MCF 10A (cell line): ENCODE measurements at regions of chr12 and their contacts with region 1.

Region 1: GRCh38 chr12:14185427-14186192 is 179.9 kb upstream of the ATF7IP start:
- DNase-seq: peak; percentile 61
- H3K4me3 Mint-ChIP-seq: no peak overlapping the region
- H3K27ac Mint-ChIP-seq: no peak overlapping the region
- H3K4me1 Mint-ChIP-seq: no peaks in the 10 kb centered on the region
- H3K27me3 Mint-ChIP-seq: peaks cover 20% of the 10 kb centered on the region
- CTCF ChIP-seq: peak; percentile 76

Region 2: DNA sequence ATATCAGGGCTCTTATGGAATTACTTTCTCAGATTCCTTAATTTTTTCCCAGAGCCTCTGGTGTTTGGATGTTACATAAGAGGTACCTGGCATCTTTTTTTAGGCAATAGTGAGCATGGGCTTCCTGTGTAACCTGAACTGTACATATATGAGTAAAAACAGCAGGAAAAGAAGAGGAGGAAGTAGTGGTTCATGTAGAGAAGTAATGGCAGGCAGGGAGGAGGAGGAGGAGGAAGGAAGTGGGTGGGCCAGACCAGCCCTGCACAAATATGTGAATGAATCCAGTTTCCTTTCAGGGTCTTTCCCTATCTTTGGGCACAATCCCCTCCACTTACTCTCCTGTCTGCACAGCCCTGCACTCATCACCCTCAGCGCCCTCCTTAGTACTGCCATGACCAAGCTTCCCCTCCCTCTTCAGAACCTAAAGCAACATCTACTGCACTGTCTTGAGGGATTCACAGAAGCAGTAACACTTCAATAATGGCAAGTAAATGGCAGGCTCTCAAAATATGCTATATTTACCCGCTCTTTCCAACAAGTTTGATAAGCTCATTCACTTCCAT is 1041.3 kb before region 1 on chr12:
- CTCF ChIA-PET with region 1: no interaction called
- POLR2A ChIA-PET with region 1: no interaction called
- intact Hi-C with region 1: no loop called
- DNase-seq: no peak
- H3K4me3 Mint-ChIP-seq: no peak overlapping the region
- H3K27ac Mint-ChIP-seq: no peak overlapping the region
- H3K4me1 Mint-ChIP-seq: no peaks in the 10 kb centered on the region
- H3K27me3 Mint-ChIP-seq: no peaks in the 10 kb centered on the region
- CTCF ChIP-seq: no peak

Region 3: DNA sequence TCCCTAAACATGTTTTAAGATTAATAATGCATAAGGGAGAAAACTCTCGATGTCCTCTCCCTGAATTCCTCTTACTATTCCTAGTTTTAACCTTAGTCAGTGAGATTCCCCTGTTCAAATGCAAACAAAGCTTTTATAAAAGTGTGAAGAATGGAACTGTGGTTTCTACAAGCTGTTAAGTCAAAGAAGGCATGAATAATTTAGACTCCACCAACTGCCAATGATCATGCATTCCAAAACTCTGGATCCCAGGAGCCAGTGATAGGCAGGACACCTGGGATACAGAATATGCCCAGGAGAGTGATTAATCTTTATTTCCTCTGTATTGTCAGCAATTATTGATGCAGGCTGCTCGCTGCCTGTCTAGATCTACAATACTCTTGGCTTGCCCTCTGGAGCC is 10.4 kb before region 1 on chr12:
- CTCF ChIA-PET with region 1: interaction called, 17 read pairs
- POLR2A ChIA-PET with region 1: no interaction called
- intact Hi-C with region 1: no loop called
- DNase-seq: no peak
- H3K4me3 Mint-ChIP-seq: no peak overlapping the region
- H3K27ac Mint-ChIP-seq: no peak overlapping the region
- H3K4me1 Mint-ChIP-seq: no peaks in the 10 kb centered on the region
- H3K27me3 Mint-ChIP-seq: peaks cover 13% of the 10 kb centered on the region
- CTCF ChIP-seq: no peak

Region 4: GRCh38 chr12:14207905-14208551 is 22.4 kb after region 1 on chr12:
- CTCF ChIA-PET with region 1: interaction called, 26 read pairs
- POLR2A ChIA-PET with region 1: interaction called, 3 read pairs
- intact Hi-C with region 1: no loop called
- DNase-seq: no peak
- H3K4me3 Mint-ChIP-seq: no peak overlapping the region
- H3K27ac Mint-ChIP-seq: no peak overlapping the region
- H3K4me1 Mint-ChIP-seq: no peaks in the 10 kb centered on the region
- H3K27me3 Mint-ChIP-seq: no peaks in the 10 kb centered on the region
- CTCF ChIP-seq: no peak

Region 5: DNA sequence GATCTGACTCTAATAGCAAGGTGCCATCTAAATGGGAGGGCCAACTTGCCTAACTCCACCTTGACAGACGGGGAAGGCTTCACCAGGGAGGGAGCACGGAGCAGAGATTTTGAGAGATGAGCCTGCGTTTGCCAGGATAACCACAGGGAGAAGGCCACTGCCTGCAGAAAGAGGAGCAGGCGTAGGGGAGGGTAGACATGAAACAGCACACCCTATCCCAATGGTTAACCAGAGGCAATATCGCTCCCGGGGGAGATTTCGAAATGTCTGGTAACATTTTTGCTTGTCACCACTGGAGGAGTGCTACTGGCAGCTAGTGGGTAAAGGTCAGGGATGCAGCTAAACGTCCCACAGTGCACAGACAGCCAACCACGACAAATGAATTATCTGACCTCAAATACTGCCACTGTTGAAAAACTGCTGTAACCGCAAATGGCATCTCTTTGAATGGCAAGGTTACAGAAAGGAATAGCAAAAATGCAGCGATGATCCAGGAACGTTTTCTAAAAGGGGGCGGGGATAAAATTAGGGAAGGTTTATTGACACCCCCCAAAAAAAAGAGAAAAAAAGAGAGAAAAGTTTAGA is 53.8 kb after region 1 on chr12:
- CTCF ChIA-PET with region 1: interaction called, 13 read pairs
- POLR2A ChIA-PET with region 1: interaction called, 3 read pairs
- intact Hi-C with region 1: no loop called
- DNase-seq: no peak
- H3K4me3 Mint-ChIP-seq: no peak overlapping the region
- H3K27ac Mint-ChIP-seq: no peak overlapping the region
- H3K4me1 Mint-ChIP-seq: peaks cover 11% of the 10 kb centered on the region
- H3K27me3 Mint-ChIP-seq: no peaks in the 10 kb centered on the region
- CTCF ChIP-seq: no peak

Region 6: DNA sequence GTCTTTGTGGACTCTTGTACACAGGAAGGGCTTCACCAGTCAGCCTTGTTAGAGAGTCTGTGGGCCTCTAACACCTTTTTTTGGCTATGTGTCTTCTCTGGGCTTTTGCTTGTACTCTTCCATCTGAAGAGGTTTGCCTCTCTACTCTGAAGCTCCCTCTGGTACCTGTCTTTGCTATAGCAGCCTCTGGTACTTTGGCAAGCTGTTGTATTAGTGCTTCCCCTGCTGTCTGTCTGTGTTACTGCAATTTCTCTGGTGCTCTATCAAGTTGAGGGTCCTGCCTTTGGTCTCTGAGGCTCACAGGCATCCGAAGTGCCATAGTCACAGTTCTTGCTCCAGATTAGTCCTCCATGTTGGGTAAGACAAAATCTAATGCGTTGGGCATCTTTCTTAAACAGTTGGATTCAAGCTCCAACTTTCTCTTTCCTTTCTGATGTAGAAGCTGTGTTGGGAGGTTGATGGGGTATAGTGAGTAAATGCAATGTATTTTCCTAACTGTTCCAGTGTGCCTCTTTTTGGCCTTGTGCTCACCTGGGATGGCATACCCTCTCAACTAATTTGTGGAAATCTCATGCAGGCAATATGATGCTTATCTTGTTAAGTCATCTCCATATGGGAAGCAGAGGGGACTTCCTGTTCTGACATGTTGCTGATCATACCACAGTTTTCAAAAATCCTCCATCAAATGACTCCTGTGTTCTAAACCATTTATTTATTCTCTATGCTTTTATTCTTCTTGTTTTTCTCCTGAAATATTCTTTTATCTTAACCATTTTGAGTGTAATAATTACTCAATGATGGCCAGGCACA is 268.7 kb after region 1 on chr12:
- CTCF ChIA-PET with region 1: interaction called, 13 read pairs
- POLR2A ChIA-PET with region 1: no interaction called
- intact Hi-C with region 1: no loop called
- DNase-seq: peak; percentile 55
- H3K4me3 Mint-ChIP-seq: no peak overlapping the region
- H3K27ac Mint-ChIP-seq: no peak overlapping the region
- H3K4me1 Mint-ChIP-seq: peaks cover 7% of the 10 kb centered on the region
- H3K27me3 Mint-ChIP-seq: no peaks in the 10 kb centered on the region
- CTCF ChIP-seq: peak; percentile 38

Region 7: GRCh38 chr12:14664510-14664909 is 478.9 kb after region 1 on chr12:
- CTCF ChIA-PET with region 1: interaction called, 27 read pairs
- POLR2A ChIA-PET with region 1: no interaction called
- intact Hi-C with region 1: loop called (anchors 1 kb)
- DNase-seq: peak; percentile 53
- H3K4me3 Mint-ChIP-seq: no peak overlapping the region
- H3K27ac Mint-ChIP-seq: no peak overlapping the region
- H3K4me1 Mint-ChIP-seq: peaks cover 5% of the 10 kb centered on the region
- H3K27me3 Mint-ChIP-seq: no peaks in the 10 kb centered on the region
- CTCF ChIP-seq: peak; percentile 58